PC-3 (cell line): ENCODE measurements at regions of chr1 and their contacts with region 1.

Region 1: DNA sequence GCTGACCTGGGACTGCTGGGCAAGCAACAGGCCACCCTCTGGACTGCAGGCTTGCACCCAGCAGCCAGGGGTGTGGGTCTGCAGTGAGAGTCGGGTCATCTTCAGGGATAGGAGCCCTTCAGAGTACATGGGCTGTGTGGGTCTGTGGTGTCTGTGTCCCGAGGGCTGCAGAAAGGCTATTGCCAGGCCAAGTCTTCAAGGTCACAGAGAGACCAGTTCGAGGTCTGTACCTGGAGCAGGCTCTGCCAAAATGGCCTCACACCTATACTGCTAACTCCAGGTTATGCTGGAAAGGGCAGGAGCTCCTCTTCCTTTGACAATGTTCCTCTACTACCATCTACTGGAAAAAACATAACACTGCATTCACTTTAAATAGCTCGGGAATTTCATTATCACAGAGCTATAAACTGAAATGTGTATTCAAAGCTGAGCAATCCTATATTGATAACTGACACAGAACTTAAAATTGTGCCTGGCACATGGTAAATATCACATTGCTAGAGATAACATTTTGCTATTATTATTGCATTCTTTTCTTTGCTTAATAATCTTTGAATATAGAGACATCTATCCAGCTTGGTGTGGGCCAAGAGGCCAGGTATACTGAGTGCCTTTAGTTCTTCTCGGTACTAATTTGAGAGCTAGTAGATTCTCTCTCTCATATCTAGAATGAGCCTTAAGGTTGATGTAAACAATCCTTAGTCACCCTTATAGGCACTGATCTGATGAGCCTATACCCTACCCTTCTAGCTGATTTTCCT is 6.9 kb upstream of the DNAH14 start:
- DNase-seq: peak; percentile 80
- ATAC-seq: peak; percentile 95
- H3K4me3 ChIP-seq: no peak overlapping the region
- H3K27ac ChIP-seq: no peak overlapping the region
- H3K4me1 ChIP-seq: no peaks in the 10 kb centered on the region
- H3K27me3 ChIP-seq: no peaks in the 10 kb centered on the region
- CTCF ChIP-seq: peak; percentile 92

Region 2: GRCh38 chr1:224503161-224504118 is 419.1 kb before region 1 on chr1:
- CTCF ChIA-PET with region 1: interaction called, 5 read pairs
- POLR2A ChIA-PET with region 1: interaction called, 16 read pairs
- intact Hi-C with region 1: no loop called
- DNase-seq: peak; percentile 95
- ATAC-seq: peak; percentile 91
- H3K4me3 ChIP-seq: peak overlapping the region; percentile 36; the same call in 1 of the 2 replicates
- H3K27ac ChIP-seq: peak overlapping the region; percentile 76
- H3K4me1 ChIP-seq: peaks cover 40% of the 10 kb centered on the region
- H3K27me3 ChIP-seq: no peaks in the 10 kb centered on the region
- CTCF ChIP-seq: peak; percentile 42; the same call in 1 of the 2 replicates

Region 3: GRCh38 chr1:224644553-224645154 is 277.9 kb before region 1 on chr1:
- CTCF ChIA-PET with region 1: interaction called, 13 read pairs
- POLR2A ChIA-PET with region 1: no interaction called
- intact Hi-C with region 1: loop called (anchors 1 kb)
- DNase-seq: peak; percentile 81
- ATAC-seq: peak; percentile 71
- H3K4me3 ChIP-seq: no peak overlapping the region
- H3K27ac ChIP-seq: no peak overlapping the region
- H3K4me1 ChIP-seq: peaks cover 9% of the 10 kb centered on the region
- H3K27me3 ChIP-seq: no peaks in the 10 kb centered on the region
- CTCF ChIP-seq: peak; percentile 98

Region 4: GRCh38 chr1:224851210-224851847 is 71.3 kb before region 1 on chr1:
- CTCF ChIA-PET with region 1: interaction called, 11 read pairs
- POLR2A ChIA-PET with region 1: no interaction called
- intact Hi-C with region 1: loop called (anchors 1 kb)
- DNase-seq: peak; percentile 88
- ATAC-seq: peak; percentile 85
- H3K4me3 ChIP-seq: no peak overlapping the region
- H3K27ac ChIP-seq: no peak overlapping the region
- H3K4me1 ChIP-seq: no peaks in the 10 kb centered on the region
- H3K27me3 ChIP-seq: no peaks in the 10 kb centered on the region
- CTCF ChIP-seq: peak; percentile 96

Region 5: DNA sequence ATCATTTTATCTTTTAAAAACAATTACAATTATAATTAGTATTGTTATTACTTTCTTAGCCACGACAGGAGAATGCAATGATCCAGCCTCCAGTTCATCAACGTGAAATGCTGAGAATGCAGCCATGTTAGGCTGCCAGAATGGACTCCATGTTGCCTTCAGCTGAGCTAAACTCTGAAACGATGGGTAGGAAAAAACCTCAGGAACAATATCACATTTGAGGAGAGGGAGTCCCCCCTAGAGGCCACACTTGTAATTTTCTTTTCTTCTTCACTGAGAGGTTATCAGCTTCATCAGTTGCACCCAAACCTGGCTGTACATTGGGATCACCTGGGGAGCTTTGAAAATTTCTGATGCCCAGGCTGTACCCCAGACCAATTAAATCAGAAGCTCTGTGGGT is 27.7 kb before region 1 on chr1:
- CTCF ChIA-PET with region 1: interaction called, 12 read pairs
- POLR2A ChIA-PET with region 1: no interaction called
- intact Hi-C with region 1: no loop called
- DNase-seq: peak; percentile 65
- ATAC-seq: peak; percentile 72
- H3K4me3 ChIP-seq: no peak overlapping the region
- H3K27ac ChIP-seq: no peak overlapping the region
- H3K4me1 ChIP-seq: no peaks in the 10 kb centered on the region
- H3K27me3 ChIP-seq: peaks cover 18% of the 10 kb centered on the region
- CTCF ChIP-seq: peak; percentile 68